ENCODE measurements at regions of chr17 and their contacts with region 1.

Region 1: GRCh38 chr17:74864866-74865395 is 5.2 kb upstream of the GRIN2C start:
- DNase-seq: peak; percentile 43 to 68
- H3K4me3 ChIP-seq: no peak overlapping the region
- H3K27ac ChIP-seq: no peak overlapping the region
- H3K4me1 ChIP-seq: no peaks in the 10 kb centered on the region
- H3K27me3 ChIP-seq: peaks cover 5% of the 10 kb centered on the region; the same call in 1 of the 2 replicates
- CTCF ChIP-seq: peak; percentile 97

Region 2: DNA sequence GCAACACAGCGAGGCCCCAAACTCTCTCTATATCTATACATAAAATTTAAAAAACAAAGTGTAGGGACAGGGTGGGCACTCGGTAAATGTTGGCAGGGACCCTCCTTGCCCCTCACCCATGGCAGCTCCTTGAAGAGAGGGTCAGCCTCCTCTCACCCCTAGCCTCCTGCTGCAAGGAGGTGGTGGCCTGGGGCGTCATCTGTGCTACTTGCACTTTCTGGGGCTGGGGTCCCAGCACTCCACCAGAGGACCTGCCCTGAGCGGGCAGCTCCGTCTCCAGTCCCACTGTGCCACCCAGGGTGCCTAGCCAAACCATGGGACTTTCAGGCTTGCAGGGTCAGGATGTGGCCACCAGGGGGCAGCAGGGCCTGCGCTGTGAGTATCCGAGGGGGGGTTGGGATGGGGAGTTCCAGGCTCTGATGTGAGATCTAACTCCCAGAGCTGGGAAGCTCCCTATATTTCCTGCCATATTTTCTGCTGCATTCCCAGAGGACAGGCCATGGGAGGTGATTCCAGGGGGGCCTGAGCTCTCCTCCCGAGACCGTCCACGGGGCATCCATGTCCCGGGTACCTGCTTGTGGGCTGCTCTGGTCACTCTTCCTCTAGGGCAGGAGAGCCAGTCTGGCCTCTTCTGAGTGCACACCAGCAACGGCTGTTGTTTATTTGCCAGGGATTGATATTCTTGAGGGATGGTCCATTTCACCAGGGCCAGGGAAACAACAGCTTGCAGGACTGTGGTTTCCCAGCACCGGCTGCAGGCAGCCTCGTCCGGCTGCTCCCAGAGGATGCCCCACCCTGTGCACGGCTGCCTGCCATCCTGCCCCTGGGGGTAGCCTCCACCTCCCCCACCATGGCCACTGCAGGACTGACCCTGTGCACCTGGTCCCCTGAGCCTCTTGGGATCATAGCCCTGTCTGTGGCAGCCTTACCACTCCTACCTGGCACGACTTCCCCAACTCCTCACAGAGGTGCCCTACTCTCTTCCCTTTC is 496.5 kb before region 1 on chr17:
- CTCF ChIA-PET with region 1: no interaction called
- POLR2A ChIA-PET with region 1: no interaction called
- intact Hi-C with region 1: loop called (anchors 5 kb)
- DNase-seq: peak in 1 of 2 experiments; percentile 60
- H3K4me3 ChIP-seq: no peak overlapping the region
- H3K27ac ChIP-seq: no peak overlapping the region
- H3K4me1 ChIP-seq: no peaks in the 10 kb centered on the region
- H3K27me3 ChIP-seq: peaks cover 80% of the 10 kb centered on the region
- CTCF ChIP-seq: peak; percentile 97

Region 3: DNA sequence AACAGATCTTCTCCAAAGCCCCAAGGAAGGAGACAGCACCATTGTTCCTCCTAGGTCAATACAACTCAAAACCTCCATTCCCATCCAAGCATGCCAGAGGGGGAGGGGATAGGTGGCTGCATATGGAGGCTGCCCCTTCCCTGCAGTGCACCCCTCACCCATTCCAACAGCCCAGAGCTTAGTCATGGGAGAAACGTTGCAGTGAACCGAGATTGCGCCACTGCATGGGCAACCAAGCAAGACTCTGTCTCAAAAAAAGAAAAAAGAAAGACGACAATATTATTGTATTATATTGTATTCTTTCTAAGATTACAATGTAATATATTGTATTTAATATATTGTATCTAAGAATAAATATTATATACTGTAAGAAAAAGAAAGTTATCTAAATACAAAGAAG is 205.0 kb before region 1 on chr17:
- CTCF ChIA-PET with region 1: interaction called, 14 read pairs
- POLR2A ChIA-PET with region 1: no interaction called
- intact Hi-C with region 1: loop called (anchors 1 kb)
- DNase-seq: no peak
- H3K4me3 ChIP-seq: no peak overlapping the region
- H3K27ac ChIP-seq: no peak overlapping the region
- H3K4me1 ChIP-seq: no peaks in the 10 kb centered on the region
- H3K27me3 ChIP-seq: peaks cover 84% of the 10 kb centered on the region
- CTCF ChIP-seq: no peak

Region 4: DNA sequence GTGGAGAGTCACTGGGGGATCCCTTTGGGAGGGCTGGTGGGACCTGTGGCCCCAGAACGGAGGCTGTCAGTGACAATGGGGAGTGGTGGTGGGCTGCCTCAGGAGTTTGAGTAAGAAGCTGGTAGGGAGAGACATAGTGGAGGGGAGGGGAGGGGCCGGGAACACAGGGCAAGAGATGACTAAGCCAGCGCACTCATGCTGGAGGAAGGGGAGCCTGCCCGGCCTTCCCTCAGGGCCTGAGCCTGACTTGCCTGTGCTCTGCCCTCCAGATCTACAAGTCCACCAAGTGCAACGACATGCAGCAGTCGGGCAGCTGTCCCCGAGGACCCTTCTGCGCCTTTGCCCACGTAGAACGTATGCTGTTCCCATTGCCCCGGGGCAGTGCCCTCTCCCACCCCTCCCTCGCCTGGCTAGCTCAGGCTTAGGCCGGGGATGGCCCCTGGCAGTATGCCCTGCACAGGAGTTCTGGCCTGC is 950.0 kb after region 1 on chr17:
- CTCF ChIA-PET with region 1: interaction called, 10 read pairs
- POLR2A ChIA-PET with region 1: no interaction called
- intact Hi-C with region 1: no loop called
- DNase-seq: peak; percentile 67 to 73
- H3K4me3 ChIP-seq: no peak overlapping the region
- H3K27ac ChIP-seq: no peak overlapping the region
- H3K4me1 ChIP-seq: peaks cover 10% of the 10 kb centered on the region
- H3K27me3 ChIP-seq: no peaks in the 10 kb centered on the region
- CTCF ChIP-seq: no peak